CD4-positive, alpha-beta memory T cell (primary cell): ENCODE measurements at regions of chr11 and their contacts with region 1.

Region 1: DNA sequence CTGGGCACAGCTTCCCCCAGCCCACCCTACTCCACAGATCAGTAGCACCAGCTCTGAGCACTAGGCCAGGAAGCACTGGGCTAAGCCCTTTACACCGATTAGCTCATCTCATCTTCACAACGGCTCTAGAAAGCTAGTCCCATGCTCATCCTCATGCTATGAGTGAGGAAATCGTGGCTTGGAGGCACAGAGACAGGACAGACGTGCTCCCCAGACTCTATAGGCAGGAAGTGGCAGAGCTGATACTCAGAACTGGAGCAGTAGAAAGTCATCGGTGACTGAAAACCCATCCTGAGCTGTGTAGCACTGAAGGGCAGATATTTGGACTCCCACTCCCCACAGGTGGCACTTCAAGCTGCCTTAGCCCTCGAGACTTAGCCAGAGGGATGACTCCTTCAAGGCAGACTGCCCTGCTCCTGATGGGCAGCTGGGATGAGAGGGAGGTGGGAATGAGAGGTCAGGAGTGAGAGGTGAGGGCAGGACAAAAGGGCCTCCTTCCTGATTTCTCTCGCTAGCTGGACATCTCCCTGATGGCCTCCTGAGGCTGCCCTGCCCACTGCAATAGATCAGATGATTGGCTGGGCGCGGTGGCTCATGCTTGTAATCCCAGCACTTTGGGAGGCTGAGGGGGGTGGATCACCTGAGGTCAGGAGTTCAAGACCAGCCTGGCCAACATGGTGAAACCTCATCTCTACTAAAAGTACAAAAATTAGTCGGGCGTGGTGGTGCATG is 9.7 kb downstream of the CD5 start:
- DNase-seq: peak; percentile 64 to 87 (median 72)
- H3K4me3 ChIP-seq: peak overlapping the region in 1 of 2 donors; percentile 20
- H3K4me3 Mint-ChIP-seq: peak overlapping the region in 5 of 8 donors; percentile 37 to 83 (median 75)
- H3K27ac ChIP-seq: peak overlapping the region; percentile 100
- H3K27ac Mint-ChIP-seq: peak overlapping the region in 5 of 7 donors; percentile 78 to 98 (median 89)
- H3K4me1 ChIP-seq: peaks cover 100% of the 10 kb centered on the region
- H3K4me1 Mint-ChIP-seq: peaks cover 0 to 100% (median 82%) of the 10 kb centered on the region in 4 donors
- H3K27me3 ChIP-seq: no peaks in the 10 kb centered on the region
- H3K27me3 Mint-ChIP-seq: no peaks in the 10 kb centered on the region

Region 2: DNA sequence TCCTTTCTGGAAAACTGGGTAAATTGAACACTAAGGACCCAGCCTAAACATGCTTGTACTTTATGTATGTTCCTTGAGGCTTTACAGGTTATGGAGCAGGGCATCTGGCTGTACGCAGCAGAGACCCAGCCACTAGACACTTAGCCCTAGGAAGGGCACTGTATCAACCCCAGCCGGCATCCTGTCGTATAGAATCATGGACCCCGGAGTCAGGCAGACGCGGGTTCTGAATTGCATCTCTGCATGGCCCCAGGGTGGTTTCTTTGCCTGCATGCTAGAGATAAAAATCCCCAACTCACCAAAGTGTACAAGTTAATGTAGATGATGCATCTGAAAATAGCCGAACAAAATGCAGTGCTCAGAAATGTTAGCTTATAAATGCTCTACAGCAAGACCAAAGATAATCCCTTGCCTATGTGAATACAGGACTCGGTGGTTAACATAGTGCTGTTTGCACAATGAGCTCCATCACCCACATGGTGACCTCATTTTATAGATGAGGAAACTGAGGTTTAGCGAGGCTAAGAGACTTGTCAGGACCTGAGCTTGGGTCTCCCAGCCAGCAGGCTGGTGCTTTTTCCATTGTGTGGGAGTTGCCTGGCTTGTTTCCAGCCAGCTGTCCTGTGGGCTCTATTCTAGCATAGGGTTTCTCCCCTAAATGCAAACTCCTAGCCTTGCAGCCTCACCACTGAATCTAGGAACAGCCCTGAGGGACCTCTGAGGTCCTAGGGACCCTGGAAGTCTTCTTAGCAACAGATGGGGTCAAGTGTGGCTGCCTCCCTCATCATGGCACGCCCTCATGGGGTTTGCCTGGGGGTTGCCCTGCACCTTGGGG is 133.2 kb before region 1 on chr11:
- CTCF ChIA-PET with region 1: interaction called, 7 read pairs
- POLR2A ChIA-PET with region 1: interaction called, 56 read pairs
- intact Hi-C with region 1: no loop called
- DNase-seq: peak; percentile 49 to 82 (median 52)
- H3K4me3 ChIP-seq: peak overlapping the region in 1 of 2 donors; percentile 28
- H3K4me3 Mint-ChIP-seq: peak overlapping the region; percentile 81 to 98 (median 86)
- H3K27ac ChIP-seq: peak overlapping the region; percentile 92
- H3K27ac Mint-ChIP-seq: peak overlapping the region; percentile 88 to 100 (median 97)
- H3K4me1 ChIP-seq: peaks cover 91% of the 10 kb centered on the region
- H3K4me1 Mint-ChIP-seq: peaks cover 55 to 98% (median 77%) of the 10 kb centered on the region in 4 donors
- H3K27me3 ChIP-seq: no peaks in the 10 kb centered on the region
- H3K27me3 Mint-ChIP-seq: no peaks in the 10 kb centered on the region

Region 3: GRCh38 chr11:61004180-61004611 is 107.8 kb before region 1 on chr11:
- CTCF ChIA-PET with region 1: no interaction called
- POLR2A ChIA-PET with region 1: interaction called, 13 read pairs
- intact Hi-C with region 1: no loop called
- DNase-seq: peak in 3 of 5 donors; percentile 47 to 76 (median 60)
- H3K4me3 ChIP-seq: peak overlapping the region; percentile 5 to 14
- H3K4me3 Mint-ChIP-seq: peak overlapping the region; percentile 63 to 87 (median 83)
- H3K27ac ChIP-seq: peak overlapping the region; percentile 54
- H3K27ac Mint-ChIP-seq: peak overlapping the region; percentile 89 to 97 (median 95)
- H3K4me1 ChIP-seq: peaks cover 93% of the 10 kb centered on the region
- H3K4me1 Mint-ChIP-seq: peaks cover 51 to 90% (median 66%) of the 10 kb centered on the region in 4 donors
- H3K27me3 ChIP-seq: no peaks in the 10 kb centered on the region
- H3K27me3 Mint-ChIP-seq: no peaks in the 10 kb centered on the region

Region 4: DNA sequence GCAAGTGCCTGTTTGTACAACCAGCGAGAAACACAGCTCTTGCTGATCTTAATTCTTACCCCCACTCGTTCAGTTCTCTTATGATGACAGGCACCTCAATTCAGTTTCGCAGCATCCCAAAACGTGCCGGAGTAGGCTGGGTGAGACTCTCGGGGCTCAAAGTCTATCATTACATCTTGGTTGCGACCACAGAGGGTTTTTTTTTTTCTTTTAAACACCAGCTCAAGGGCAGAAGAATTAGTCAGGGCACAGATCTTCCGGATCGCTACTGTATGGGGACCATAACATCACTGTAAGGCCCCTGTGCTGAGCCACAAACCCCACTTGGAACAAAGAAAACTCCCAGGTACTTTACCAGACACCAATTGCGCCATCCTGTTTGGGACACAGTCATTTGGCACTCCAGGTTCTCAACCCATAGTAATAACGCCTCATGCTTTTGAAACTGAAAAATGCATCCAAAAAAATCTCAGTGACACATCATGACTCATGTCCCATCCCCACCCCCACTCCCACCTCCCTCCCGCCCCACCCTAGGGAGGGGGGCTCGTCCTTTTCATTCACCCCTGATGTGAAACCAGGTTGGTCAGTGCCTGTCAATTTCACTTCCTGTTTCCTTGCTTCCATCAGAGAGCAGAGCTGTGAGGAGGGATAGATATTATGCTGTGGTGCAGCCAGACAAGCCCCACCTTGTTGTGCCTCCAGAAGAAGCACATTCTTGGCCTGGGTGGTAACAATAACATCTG is 50.7 kb before region 1 on chr11:
- CTCF ChIA-PET with region 1: interaction called, 3 read pairs
- POLR2A ChIA-PET with region 1: interaction called, 20 read pairs
- intact Hi-C with region 1: no loop called
- DNase-seq: peak; percentile 60 to 97 (median 65)
- H3K4me3 ChIP-seq: peak overlapping the region; percentile 17 to 48
- H3K4me3 Mint-ChIP-seq: peak overlapping the region; percentile 72 to 93 (median 86)
- H3K27ac ChIP-seq: peak overlapping the region; percentile 69
- H3K27ac Mint-ChIP-seq: peak overlapping the region; percentile 94 to 99 (median 97)
- H3K4me1 ChIP-seq: peaks cover 75% of the 10 kb centered on the region
- H3K4me1 Mint-ChIP-seq: peaks cover 59 to 91% (median 66%) of the 10 kb centered on the region in 4 donors
- H3K27me3 ChIP-seq: no peaks in the 10 kb centered on the region
- H3K27me3 Mint-ChIP-seq: no peaks in the 10 kb centered on the region

Region 5: GRCh38 chr11:61091373-61092279 is 20.3 kb before region 1 on chr11:
- CTCF ChIA-PET with region 1: interaction called, 8 read pairs
- POLR2A ChIA-PET with region 1: interaction called, 79 read pairs
- intact Hi-C with region 1: no loop called
- DNase-seq: peak in 1 of 5 donors; percentile 74
- H3K4me3 ChIP-seq: peak overlapping the region in 1 of 2 donors; percentile 16
- H3K4me3 Mint-ChIP-seq: peak overlapping the region; percentile 71 to 89 (median 80)
- H3K27ac ChIP-seq: peak overlapping the region; percentile 87
- H3K27ac Mint-ChIP-seq: peak overlapping the region; percentile 95 to 99 (median 97)
- H3K4me1 ChIP-seq: peaks cover 52% of the 10 kb centered on the region
- H3K4me1 Mint-ChIP-seq: peaks cover 44 to 75% (median 50%) of the 10 kb centered on the region in 4 donors
- H3K27me3 ChIP-seq: no peaks in the 10 kb centered on the region
- H3K27me3 Mint-ChIP-seq: no peaks in the 10 kb centered on the region